ENCODE measurements at regions of chr7 and their contacts with region 1.

Region 1: DNA sequence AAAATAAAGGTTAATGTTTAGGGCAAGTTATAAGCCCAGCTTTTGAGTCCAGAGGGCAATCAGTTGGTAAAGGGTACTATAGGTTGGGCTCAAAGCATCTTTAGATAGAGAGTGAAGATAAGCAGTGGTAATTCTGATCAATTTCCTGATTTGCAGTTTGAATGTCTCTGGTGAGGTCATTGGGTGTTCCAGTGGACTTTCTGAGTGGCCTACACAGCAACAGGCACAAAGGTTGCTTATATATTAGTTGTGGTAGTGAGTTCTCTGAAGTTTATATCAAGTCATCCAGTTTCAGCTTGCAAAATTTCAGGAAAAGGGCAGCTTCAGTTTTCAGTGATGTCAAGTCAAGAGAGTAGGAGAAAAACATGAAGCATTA is 29.1 kb downstream of the GIMAP5 start:
- DNase-seq: no peak
- CTCF ChIP-seq: no peak

Region 2: DNA sequence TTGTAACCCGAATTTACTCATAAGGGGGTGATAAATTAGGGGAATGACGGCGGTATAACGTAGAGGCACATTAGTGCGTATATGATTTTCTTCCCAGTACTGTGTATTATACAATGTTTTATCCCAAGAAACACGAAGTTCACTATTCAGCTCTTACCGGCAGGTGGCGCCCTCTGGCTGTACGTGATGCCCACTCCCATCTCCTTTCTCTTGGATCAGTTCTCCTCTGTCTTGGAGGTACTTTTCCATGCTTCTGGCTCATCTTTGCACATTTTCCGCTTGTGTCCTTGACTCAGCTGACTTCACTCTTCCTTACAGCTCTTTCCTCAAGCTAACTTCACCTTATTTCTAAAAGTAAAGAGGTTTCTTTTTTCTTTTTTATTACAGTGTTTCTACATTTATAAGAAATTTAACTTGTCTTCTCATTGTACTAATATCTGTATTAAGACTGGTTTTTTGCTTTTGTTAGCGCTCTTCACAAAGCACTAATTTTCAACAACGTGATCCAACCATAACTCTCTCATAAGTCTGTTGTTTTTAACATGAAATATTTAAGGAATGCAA is 12.5 kb after region 1 on chr7:
- CTCF ChIA-PET with region 1: interaction called, 11 read pairs
- POLR2A ChIA-PET with region 1: interaction called, 3 read pairs
- DNase-seq: peak; percentile 59
- CTCF ChIP-seq: peak; percentile 80

Measured in GM10248 (cell line).